ENCODE measurements at regions of chr3 and their contacts with region 1.

Region 1: DNA sequence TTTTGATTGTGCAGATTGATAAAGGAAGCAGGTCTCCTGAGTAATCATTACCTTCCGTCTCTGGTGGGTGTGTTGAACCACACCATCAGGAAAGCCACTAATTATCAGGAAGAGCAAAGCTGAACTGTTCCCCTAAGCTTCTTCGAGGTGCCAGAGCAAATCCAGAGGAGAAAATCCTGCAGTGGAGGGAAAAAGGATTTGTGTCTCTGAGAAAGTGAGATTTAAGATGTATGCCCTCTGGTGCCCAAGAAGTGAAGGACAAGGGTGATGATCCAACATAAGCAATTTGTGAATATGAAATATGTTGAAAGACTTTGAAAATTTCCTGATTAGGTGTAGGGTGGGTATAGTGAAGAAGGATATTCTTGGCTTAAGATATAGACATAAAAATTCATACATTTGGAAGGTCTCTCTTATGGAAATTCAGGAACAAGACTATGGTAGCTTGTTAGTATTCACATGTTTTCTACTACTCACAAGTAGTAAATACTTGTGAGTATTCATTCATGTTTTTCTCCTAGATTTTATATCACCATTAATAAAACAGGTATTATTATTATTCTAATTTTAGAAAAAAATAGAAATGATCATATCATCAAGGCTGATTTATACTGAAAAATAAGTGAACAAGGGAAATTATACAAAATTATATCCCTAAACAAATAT is 34.8 kb downstream of the COMMD2 start:
- DNase-seq: peak in 3 of 9 experiments; percentile 13 to 52 (median 29)
- ATAC-seq: no peak
- H3K4me3 ChIP-seq: no peak overlapping the region
- H3K4me3 Mint-ChIP-seq: no peak overlapping the region
- H3K27ac ChIP-seq: no peak overlapping the region
- H3K27ac Mint-ChIP-seq: no peak overlapping the region
- H3K4me1 ChIP-seq: no peaks in the 10 kb centered on the region
- H3K4me1 Mint-ChIP-seq: no peaks in the 10 kb centered on the region
- H3K27me3 ChIP-seq: no peaks in the 10 kb centered on the region
- H3K27me3 Mint-ChIP-seq: no peaks in the 10 kb centered on the region
- CTCF ChIP-seq: peak; percentile 57

Region 2: GRCh38 chr3:148955544-148956346 is 761.8 kb before region 1 on chr3:
- CTCF ChIA-PET with region 1: no interaction called
- POLR2A ChIA-PET with region 1: no interaction called
- intact Hi-C with region 1: loop called in 1 of 2 experiments (anchors 5 kb)
- DNase-seq: peak in 2 of 9 experiments; percentile 62 to 66
- ATAC-seq: no peak
- H3K4me3 ChIP-seq: no peak overlapping the region
- H3K4me3 Mint-ChIP-seq: no peak overlapping the region
- H3K27ac ChIP-seq: no peak overlapping the region
- H3K27ac Mint-ChIP-seq: no peak overlapping the region
- H3K4me1 ChIP-seq: no peaks in the 10 kb centered on the region
- H3K4me1 Mint-ChIP-seq: no peaks in the 10 kb centered on the region
- H3K27me3 ChIP-seq: no peaks in the 10 kb centered on the region
- H3K27me3 Mint-ChIP-seq: peaks cover 2% of the 10 kb centered on the region
- CTCF ChIP-seq: peak; percentile 48

Region 3: GRCh38 chr3:149566292-149566975 is 151.1 kb before region 1 on chr3:
- CTCF ChIA-PET with region 1: interaction called, 10 read pairs
- POLR2A ChIA-PET with region 1: no interaction called
- intact Hi-C with region 1: no loop called
- DNase-seq: no peak
- ATAC-seq: no peak
- H3K4me3 ChIP-seq: no peak overlapping the region
- H3K4me3 Mint-ChIP-seq: no peak overlapping the region
- H3K27ac ChIP-seq: no peak overlapping the region
- H3K27ac Mint-ChIP-seq: no peak overlapping the region
- H3K4me1 ChIP-seq: no peaks in the 10 kb centered on the region
- H3K4me1 Mint-ChIP-seq: no peaks in the 10 kb centered on the region
- H3K27me3 ChIP-seq: no peaks in the 10 kb centered on the region
- H3K27me3 Mint-ChIP-seq: no peaks in the 10 kb centered on the region
- CTCF ChIP-seq: no peak